ENCODE measurements at regions of chr5 and their contacts with region 1.

Region 1: GRCh38 chr5:17326600-17327037 is 109.2 kb downstream of the BASP1 start:
- DNase-seq: no peak
- H3K4me3 ChIP-seq: no peak overlapping the region
- H3K27ac ChIP-seq: no peak overlapping the region
- H3K4me1 ChIP-seq: no peaks in the 10 kb centered on the region
- H3K27me3 ChIP-seq: no peaks in the 10 kb centered on the region
- CTCF ChIP-seq: no peak

Region 2: DNA sequence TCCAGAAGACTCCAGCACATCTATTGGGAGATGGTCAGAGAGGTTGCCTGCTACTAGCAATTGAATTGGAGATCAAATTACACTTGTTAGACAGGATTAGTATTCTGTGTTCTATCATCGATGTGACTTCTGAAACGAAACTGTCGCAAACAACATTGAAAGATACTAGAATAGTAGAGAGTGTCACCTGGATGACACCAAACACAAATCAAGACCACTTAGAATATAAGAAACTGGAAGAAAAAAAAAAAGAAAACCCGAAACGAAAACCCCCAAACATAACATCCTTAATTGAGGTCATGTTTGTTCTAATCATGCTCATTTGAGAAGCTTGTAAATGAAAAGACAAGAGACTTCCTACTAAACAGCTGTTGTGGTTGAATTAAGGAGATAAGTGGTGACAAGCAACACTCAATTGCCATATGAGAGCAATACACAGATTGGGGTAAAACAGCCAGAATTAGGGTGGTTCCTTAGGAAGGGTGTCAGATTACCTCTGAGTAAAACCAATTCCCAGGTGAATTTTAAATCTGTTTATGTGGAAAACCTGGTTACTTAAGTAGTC is 11.6 kb before region 1 on chr5:
- CTCF ChIA-PET with region 1: no interaction called
- dilution Hi-C with region 1: no loop called
- in situ Hi-C with region 1: no loop called
- intact Hi-C with region 1: no loop called
- DNase-seq: no peak
- H3K4me3 ChIP-seq: no peak overlapping the region
- H3K27ac ChIP-seq: no peak overlapping the region
- H3K4me1 ChIP-seq: peaks cover 27% of the 10 kb centered on the region
- H3K27me3 ChIP-seq: no peaks in the 10 kb centered on the region
- CTCF ChIP-seq: no peak

Region 3: GRCh38 chr5:17365811-17366138 is 39.2 kb after region 1 on chr5:
- CTCF ChIA-PET with region 1: no interaction called
- dilution Hi-C with region 1: loop called (anchors 5 kb)
- in situ Hi-C with region 1: no loop called
- intact Hi-C with region 1: no loop called
- DNase-seq: no peak
- H3K4me3 ChIP-seq: no peak overlapping the region
- H3K27ac ChIP-seq: no peak overlapping the region
- H3K4me1 ChIP-seq: peaks cover 5% of the 10 kb centered on the region
- H3K27me3 ChIP-seq: no peaks in the 10 kb centered on the region
- CTCF ChIP-seq: no peak

Measured in mammary epithelial cell (primary cell).